ENCODE measurements at regions of chr6 and their contacts with region 1.

Region 1: GRCh38 chr6:26159357-26160273 is 72.4 kb downstream of the HFE start:
- DNase-seq: no peak
- H3K4me3 ChIP-seq: peak overlapping the region; percentile 50
- CTCF ChIP-seq: no peak

Region 2: GRCh38 chr6:26122793-26123674 is 36.6 kb before region 1 on chr6:
- in situ Hi-C with region 1: no loop called
- DNase-seq: peak; percentile 92
- H3K4me3 ChIP-seq: peak overlapping the region; percentile 98
- CTCF ChIP-seq: no peak

Region 3: DNA sequence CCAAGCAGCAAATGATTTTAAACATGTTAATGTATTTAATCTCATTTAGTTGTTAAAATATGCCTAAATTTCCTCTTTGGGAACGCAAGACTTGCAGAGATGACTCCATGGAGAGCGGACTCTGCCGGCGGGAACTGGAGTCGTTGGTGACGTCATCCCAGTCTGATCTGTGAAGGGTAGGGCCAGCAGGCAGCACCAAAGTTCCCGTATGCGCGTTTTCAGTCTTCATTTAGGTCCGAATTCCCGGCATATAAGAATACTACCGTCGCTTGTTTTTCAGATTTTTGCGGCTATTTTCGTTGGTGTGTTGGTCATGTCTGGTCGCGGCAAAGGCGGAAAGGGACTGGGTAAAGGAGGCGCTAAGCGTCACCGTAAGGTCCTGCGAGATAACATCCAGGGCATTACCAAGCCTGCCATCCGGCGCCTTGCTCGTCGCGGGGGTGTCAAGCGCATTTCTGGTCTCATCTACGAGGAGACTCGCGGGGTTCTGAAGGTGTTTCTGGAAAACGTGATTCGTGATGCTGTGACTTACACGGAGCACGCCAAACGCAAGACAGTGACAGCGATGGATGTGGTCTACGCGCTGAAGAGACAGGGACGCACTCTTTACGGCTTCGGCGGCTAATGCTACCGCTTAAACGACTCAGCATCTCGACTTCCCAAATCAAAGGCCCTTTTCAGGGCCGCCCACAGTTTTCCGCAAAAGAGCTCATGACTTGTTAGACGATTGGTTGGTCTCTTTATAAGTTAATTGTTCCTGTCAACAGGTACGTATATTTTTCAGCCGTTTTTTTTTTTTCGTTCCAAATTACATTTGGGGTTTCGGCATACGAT is 44.9 kb after region 1 on chr6:
- in situ Hi-C with region 1: loop called (anchors 5 kb)
- DNase-seq: peak; percentile 99
- H3K4me3 ChIP-seq: peak overlapping the region; percentile 97
- CTCF ChIP-seq: peak; percentile 50